CD4-positive, alpha-beta T cell (primary cell): ENCODE measurements at regions of chr10 and their contacts with region 1.

Region 1: GRCh38 chr10:123994417-123995081 is 98.8 kb downstream of the CHST15 start:
- DNase-seq: peak; percentile 62 to 88 (median 74)
- ATAC-seq: peak; percentile 87
- H3K4me3 ChIP-seq: peak overlapping the region; percentile 6
- H3K4me3 Mint-ChIP-seq: peak overlapping the region; percentile 38
- H3K27ac ChIP-seq: no peak overlapping the region
- H3K27ac Mint-ChIP-seq: no peak overlapping the region
- H3K4me1 ChIP-seq: peaks cover 17% of the 10 kb centered on the region
- H3K4me1 Mint-ChIP-seq: peaks cover 16% of the 10 kb centered on the region
- H3K27me3 ChIP-seq: peaks cover 27 to 49% of the 10 kb centered on the region in 2 experiments
- H3K27me3 Mint-ChIP-seq: peaks cover 82% of the 10 kb centered on the region
- CTCF ChIP-seq: peak; percentile 88

Region 2: GRCh38 chr10:124063750-124064603 is 69.4 kb after region 1 on chr10:
- CTCF ChIA-PET with region 1: interaction called, 3 read pairs
- POLR2A ChIA-PET with region 1: no interaction called
- intact Hi-C with region 1: loop called in 1 of 2 experiments (anchors 2 kb)
- DNase-seq: peak in 3 of 14 experiments; percentile 44 to 57 (median 46)
- ATAC-seq: peak; percentile 51
- H3K4me3 ChIP-seq: peak overlapping the region; percentile 44
- H3K4me3 Mint-ChIP-seq: no peak overlapping the region
- H3K27ac ChIP-seq: peak overlapping the region in 1 of 2 donors; percentile 13
- H3K27ac Mint-ChIP-seq: peak overlapping the region; percentile 86
- H3K4me1 ChIP-seq: peaks cover 4% of the 10 kb centered on the region
- H3K4me1 Mint-ChIP-seq: peaks cover 32% of the 10 kb centered on the region
- H3K27me3 ChIP-seq: no peaks in the 10 kb centered on the region
- H3K27me3 Mint-ChIP-seq: no peaks in the 10 kb centered on the region
- CTCF ChIP-seq: no peak

Region 3: GRCh38 chr10:124827474-124827873 is 832.9 kb after region 1 on chr10:
- CTCF ChIA-PET with region 1: no interaction called
- POLR2A ChIA-PET with region 1: no interaction called
- intact Hi-C with region 1: loop called in 1 of 2 experiments (anchors 10 kb)
- DNase-seq: peak in 3 of 14 experiments; percentile 28 to 45 (median 44)
- ATAC-seq: no peak
- H3K4me3 ChIP-seq: no peak overlapping the region
- H3K4me3 Mint-ChIP-seq: no peak overlapping the region
- H3K27ac ChIP-seq: no peak overlapping the region
- H3K27ac Mint-ChIP-seq: no peak overlapping the region
- H3K4me1 ChIP-seq: no peaks in the 10 kb centered on the region
- H3K4me1 Mint-ChIP-seq: no peaks in the 10 kb centered on the region
- H3K27me3 ChIP-seq: no peaks in the 10 kb centered on the region
- H3K27me3 Mint-ChIP-seq: no peaks in the 10 kb centered on the region
- CTCF ChIP-seq: peak; percentile 63